ENCODE measurements at regions of chr5 and their contacts with region 1.

Region 1: GRCh38 chr5:38922199-38922598 is 76.4 kb downstream of the OSMR start:
- DNase-seq: peak; percentile 65
- H3K4me3 ChIP-seq: no peak overlapping the region
- H3K27ac ChIP-seq: no peak overlapping the region
- H3K4me1 ChIP-seq: no peaks in the 10 kb centered on the region
- H3K27me3 ChIP-seq: peaks cover 0 to 3% of the 10 kb centered on the region in 2 experiments
- CTCF ChIP-seq: peak; percentile 87 to 88
- POLR2A ChIP-seq: no peak

Region 2: GRCh38 chr5:38208782-38209378 is 713.3 kb before region 1 on chr5:
- CTCF ChIA-PET with region 1: interaction called, 4 read pairs
- POLR2A ChIA-PET with region 1: no interaction called
- dilution Hi-C with region 1: no loop called
- intact Hi-C with region 1: loop called (anchors 2 kb)
- DNase-seq: peak; percentile 22
- H3K4me3 ChIP-seq: no peak overlapping the region
- H3K27ac ChIP-seq: no peak overlapping the region
- H3K4me1 ChIP-seq: no peaks in the 10 kb centered on the region
- H3K27me3 ChIP-seq: no peaks in the 10 kb centered on the region
- CTCF ChIP-seq: peak; percentile 21 to 33
- POLR2A ChIP-seq: no peak

Region 3: GRCh38 chr5:38382898-38383297 is 539.3 kb before region 1 on chr5:
- CTCF ChIA-PET with region 1: interaction called, 12 read pairs
- POLR2A ChIA-PET with region 1: no interaction called
- dilution Hi-C with region 1: no loop called
- intact Hi-C with region 1: loop called (anchors 2 kb)
- DNase-seq: peak; percentile 72
- H3K4me3 ChIP-seq: no peak overlapping the region
- H3K27ac ChIP-seq: no peak overlapping the region
- H3K4me1 ChIP-seq: no peaks in the 10 kb centered on the region
- H3K27me3 ChIP-seq: peaks cover under 1 to 2% of the 10 kb centered on the region in 2 experiments
- CTCF ChIP-seq: peak; percentile 80 to 81
- POLR2A ChIP-seq: no peak

Region 4: DNA sequence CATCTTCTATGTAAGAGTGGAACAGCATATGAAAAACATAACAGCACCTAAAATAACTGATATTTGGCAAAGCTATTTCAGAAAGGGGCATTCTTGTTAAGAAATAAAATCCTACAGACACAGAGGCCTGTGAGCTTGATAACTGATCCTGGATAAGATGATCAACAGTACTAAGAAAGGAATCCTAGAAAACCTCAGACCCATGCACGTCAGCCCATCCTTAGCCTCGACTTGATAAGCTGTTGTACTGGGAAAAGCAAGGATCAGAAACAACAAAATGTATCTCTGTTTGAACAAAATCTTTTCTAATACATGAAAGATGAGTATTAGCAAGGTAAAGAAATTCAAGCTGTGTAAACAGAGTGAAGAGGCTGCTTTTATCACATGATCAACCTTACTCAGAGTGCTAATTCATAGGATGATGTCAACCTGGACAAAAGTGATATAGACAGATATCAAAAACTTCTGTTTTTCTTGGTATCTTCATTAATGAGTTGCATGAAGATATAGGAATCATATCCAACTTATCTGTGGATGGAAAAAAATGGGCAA is 380.9 kb before region 1 on chr5:
- CTCF ChIA-PET with region 1: no interaction called
- POLR2A ChIA-PET with region 1: no interaction called
- dilution Hi-C with region 1: no loop called
- intact Hi-C with region 1: no loop called
- DNase-seq: no peak
- H3K4me3 ChIP-seq: no peak overlapping the region
- H3K27ac ChIP-seq: no peak overlapping the region
- H3K4me1 ChIP-seq: no peaks in the 10 kb centered on the region
- H3K27me3 ChIP-seq: no peaks in the 10 kb centered on the region
- CTCF ChIP-seq: no peak
- POLR2A ChIP-seq: no peak

Region 5: DNA sequence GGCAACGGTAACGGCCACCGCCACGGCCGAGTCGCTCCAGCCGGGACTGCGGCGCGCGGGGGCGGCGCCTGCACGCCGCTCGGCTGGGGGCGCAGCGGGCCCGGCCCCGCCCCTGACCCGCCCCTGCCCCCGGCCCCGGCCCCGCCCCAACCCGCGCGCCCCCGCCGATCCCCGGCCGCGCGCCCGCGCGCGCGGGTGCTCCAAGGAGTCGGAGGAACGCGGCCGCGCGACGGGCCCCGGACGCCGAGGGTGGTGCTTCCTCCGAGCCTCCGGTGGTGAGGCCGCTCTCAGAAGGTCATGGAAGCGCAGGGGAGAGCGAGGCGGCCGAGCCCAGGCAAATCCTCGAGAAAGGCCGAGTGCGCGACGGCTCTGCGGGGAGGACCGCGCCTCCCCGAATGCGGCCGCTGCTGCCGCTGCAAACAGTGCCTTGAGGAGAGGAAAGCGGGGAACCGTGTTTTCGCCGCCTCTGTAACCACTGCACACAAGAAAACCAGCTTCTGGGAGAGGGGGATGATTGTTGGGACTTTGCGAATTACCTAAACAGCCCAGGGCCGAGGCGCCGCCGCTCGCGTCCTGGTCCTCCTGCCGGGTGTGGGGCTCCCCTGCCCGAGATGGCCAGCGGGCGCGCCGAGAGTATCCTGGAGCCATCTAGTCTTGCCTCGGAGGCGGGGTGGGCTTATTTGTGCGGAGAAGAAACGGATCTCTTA is 365.4 kb before region 1 on chr5 and contains the start of gene LIFR:
- CTCF ChIA-PET with region 1: no interaction called
- POLR2A ChIA-PET with region 1: no interaction called
- dilution Hi-C with region 1: no loop called
- intact Hi-C with region 1: loop called (anchors 10 kb)
- DNase-seq: peak; percentile 80
- H3K4me3 ChIP-seq: peak within 1 kb of the TSS; percentile 82 to 86 (median 83)
- H3K27ac ChIP-seq: peak within 1 kb of the TSS; percentile 68
- H3K4me1 ChIP-seq: peaks cover 21% of the 10 kb centered on the region
- H3K27me3 ChIP-seq: peaks cover 0 to 2% of the 10 kb centered on the region in 2 experiments
- CTCF ChIP-seq: peak in 1 of 2 donors; percentile 3
- POLR2A ChIP-seq: peak; percentile 66
- total RNA-seq, gene LIFR: 34.9 and 36.4 TPM in 2 replicates

Region 6: DNA sequence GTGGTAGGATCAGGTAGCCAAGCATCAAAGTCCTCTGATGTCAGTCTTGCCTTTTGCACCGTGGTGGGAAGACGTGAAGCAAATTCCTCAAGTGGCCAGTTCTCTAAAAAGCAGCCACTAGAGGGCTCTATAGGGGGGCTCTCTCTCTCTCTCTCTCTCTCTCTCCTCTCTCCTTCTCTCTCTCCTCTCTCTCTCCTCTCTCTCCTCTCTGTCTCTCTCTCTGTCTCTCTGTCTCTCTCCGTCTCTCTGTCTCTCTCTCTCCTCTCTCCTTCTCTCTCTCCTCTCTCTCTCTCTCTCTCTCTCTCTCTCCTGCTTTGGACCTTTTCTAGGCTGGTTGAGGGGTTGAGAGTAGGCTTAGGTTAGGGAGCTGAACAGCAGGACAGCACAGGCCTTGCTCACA is 90.3 kb before region 1 on chr5:
- CTCF ChIA-PET with region 1: interaction called, 41 read pairs
- POLR2A ChIA-PET with region 1: no interaction called
- dilution Hi-C with region 1: no loop called
- intact Hi-C with region 1: loop called (anchors 1 kb)
- DNase-seq: peak; percentile 43
- H3K4me3 ChIP-seq: no peak overlapping the region
- H3K27ac ChIP-seq: no peak overlapping the region
- H3K4me1 ChIP-seq: peaks cover 8% of the 10 kb centered on the region
- H3K27me3 ChIP-seq: no peaks in the 10 kb centered on the region
- CTCF ChIP-seq: peak; percentile 41 to 71
- POLR2A ChIP-seq: no peak

Region 7: GRCh38 chr5:38845526-38846378 is 76.4 kb before region 1 on chr5 and contains the start of gene OSMR:
- CTCF ChIA-PET with region 1: interaction called, 13 read pairs
- POLR2A ChIA-PET with region 1: no interaction called
- dilution Hi-C with region 1: no loop called
- intact Hi-C with region 1: loop called (anchors 1 kb)
- DNase-seq: peak; percentile 94
- H3K4me3 ChIP-seq: peak within 1 kb of the TSS; percentile 77 to 86 (median 85)
- H3K27ac ChIP-seq: peak within 1 kb of the TSS; percentile 83
- H3K4me1 ChIP-seq: peaks cover 7% of the 10 kb centered on the region
- H3K27me3 ChIP-seq: peaks cover 3 to 6% of the 10 kb centered on the region in 2 experiments
- CTCF ChIP-seq: no peak
- POLR2A ChIP-seq: peak; percentile 76
- total RNA-seq, gene OSMR: 12.8 and 19.7 TPM in 2 replicates

Region 8: DNA sequence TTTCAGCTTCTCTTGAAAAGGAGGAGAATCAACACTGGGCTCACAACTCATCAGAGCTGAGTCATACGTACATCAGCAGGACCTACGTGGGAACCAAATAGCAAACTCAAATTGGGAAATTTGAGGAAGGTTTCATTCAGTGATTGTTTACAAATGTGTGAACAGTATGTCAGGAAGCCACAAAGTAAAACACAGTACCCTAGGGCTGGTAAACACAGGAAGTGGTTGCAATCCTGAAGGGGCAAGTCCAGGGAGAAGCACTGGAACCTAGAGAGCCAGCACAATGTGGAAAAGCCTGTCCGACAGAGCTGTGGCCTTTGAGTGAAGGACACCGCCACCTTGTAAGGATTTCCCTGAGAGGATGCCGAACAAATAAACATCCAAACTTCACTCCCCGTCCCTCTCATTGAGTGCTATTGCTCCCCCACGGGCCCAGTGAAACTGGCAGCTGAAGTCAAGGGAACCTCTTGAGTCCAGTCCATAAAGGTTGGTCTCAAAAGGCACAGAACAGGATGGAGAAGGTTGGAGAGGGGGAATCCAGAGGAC is 178.7 kb after region 1 on chr5:
- CTCF ChIA-PET with region 1: no interaction called
- POLR2A ChIA-PET with region 1: no interaction called
- dilution Hi-C with region 1: no loop called
- intact Hi-C with region 1: no loop called
- DNase-seq: peak; percentile 65
- H3K4me3 ChIP-seq: no peak overlapping the region
- H3K27ac ChIP-seq: peak overlapping the region; percentile 14
- H3K4me1 ChIP-seq: peaks cover 20% of the 10 kb centered on the region
- H3K27me3 ChIP-seq: no peaks in the 10 kb centered on the region
- CTCF ChIP-seq: no peak
- POLR2A ChIP-seq: no peak

Region 9: GRCh38 chr5:39452846-39453245 is 530.6 kb after region 1 on chr5:
- CTCF ChIA-PET with region 1: no interaction called
- POLR2A ChIA-PET with region 1: no interaction called
- dilution Hi-C with region 1: no loop called
- intact Hi-C with region 1: no loop called
- DNase-seq: no peak
- H3K4me3 ChIP-seq: no peak overlapping the region
- H3K27ac ChIP-seq: no peak overlapping the region
- H3K4me1 ChIP-seq: peaks cover 5% of the 10 kb centered on the region
- H3K27me3 ChIP-seq: no peaks in the 10 kb centered on the region
- CTCF ChIP-seq: no peak
- POLR2A ChIP-seq: no peak

Measured in endothelial cell of umbilical vein (primary cell).